Activated CD4-positive, alpha-beta T cell treated with anti-CD3 and anti-CD28 coated beads, Interleukin-2, amount 10 ng/mL, durations not matched to agents 24 days and 14 days (primary cell): ENCODE measurements at regions of chr6 and their contacts with region 1.

Region 1: DNA sequence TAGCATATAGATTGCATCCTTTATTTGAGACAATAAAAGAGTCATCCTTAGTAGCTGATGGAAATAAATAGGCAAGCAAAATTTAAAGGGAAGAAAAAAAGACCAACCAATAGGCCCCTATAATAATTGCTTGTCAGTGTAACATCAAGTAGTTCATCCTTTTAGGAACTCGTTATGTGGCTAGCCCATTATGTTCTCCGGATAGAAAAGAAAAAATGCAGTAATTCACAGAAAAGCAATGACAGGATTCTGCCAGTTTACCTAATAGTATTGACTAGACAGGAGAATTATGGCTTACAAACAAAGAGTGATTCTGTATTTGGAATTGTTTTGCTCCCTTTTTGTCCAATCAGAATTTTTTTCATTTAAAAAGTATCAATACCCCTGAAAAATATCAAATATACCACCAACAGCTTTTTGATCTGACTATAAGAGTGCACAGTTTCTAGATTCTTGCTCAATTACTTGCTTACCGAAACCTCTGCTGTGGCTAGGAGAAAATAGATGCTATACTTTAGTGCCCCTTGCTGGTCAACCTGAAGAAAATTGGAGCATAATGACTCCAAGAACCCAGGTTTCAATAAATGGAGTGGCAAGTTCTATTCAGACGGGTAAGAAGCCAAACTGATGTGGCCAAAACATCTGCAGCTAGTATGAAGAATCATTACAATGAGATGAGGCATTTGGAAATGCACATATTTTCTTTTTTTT is 91.5 kb upstream of the SASH1 start:
- DNase-seq: no peak
- H3K4me3 Mint-ChIP-seq: no peak overlapping the region
- H3K27ac Mint-ChIP-seq: no peak overlapping the region
- H3K4me1 Mint-ChIP-seq: no peaks in the 10 kb centered on the region
- H3K27me3 Mint-ChIP-seq: peaks cover 16% of the 10 kb centered on the region

Region 2: GRCh38 chr6:148177589-148178233 is 73.4 kb before region 1 on chr6:
- intact Hi-C with region 1: loop called (anchors 1 kb)
- DNase-seq: peak; percentile 70
- H3K4me3 Mint-ChIP-seq: no peak overlapping the region
- H3K27ac Mint-ChIP-seq: no peak overlapping the region
- H3K4me1 Mint-ChIP-seq: no peaks in the 10 kb centered on the region
- H3K27me3 Mint-ChIP-seq: peaks cover 12% of the 10 kb centered on the region

Region 3: DNA sequence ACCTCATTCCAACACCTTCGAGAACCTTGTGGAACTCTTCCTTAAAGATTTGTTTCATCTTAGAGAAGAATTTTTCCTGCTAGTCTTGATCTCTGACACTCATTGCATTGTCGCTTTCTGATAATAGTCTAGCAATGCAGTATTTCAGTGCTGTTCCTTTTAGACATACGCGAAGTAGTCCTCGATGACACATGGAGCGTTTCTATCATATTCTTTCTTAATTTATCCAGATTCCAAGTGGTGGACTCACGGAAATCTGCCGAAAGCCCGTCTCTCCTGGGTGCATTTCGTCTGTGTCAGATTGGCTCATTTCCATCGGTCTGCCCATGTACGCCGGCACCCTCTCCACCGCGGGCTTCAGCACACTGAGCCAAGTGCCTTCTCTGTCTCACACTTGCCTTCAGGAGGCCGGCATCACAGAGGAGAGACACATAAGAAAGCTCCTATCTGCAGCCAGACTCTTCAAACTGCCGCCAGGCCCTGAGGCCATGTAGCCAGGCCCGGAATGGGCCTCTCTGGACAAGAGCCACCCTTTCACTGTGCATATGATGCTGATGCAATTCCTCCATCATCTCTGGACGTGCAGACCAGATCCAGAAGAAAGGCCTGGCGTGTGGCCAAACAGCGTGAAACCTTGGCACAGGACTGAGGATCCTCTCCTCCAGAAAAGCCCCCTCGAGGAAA is 297.1 kb after region 1 on chr6:
- intact Hi-C with region 1: no loop called
- DNase-seq: no peak
- H3K4me3 Mint-ChIP-seq: no peak overlapping the region
- H3K27ac Mint-ChIP-seq: no peak overlapping the region
- H3K4me1 Mint-ChIP-seq: no peaks in the 10 kb centered on the region
- H3K27me3 Mint-ChIP-seq: peaks cover 15% of the 10 kb centered on the region

Region 4: DNA sequence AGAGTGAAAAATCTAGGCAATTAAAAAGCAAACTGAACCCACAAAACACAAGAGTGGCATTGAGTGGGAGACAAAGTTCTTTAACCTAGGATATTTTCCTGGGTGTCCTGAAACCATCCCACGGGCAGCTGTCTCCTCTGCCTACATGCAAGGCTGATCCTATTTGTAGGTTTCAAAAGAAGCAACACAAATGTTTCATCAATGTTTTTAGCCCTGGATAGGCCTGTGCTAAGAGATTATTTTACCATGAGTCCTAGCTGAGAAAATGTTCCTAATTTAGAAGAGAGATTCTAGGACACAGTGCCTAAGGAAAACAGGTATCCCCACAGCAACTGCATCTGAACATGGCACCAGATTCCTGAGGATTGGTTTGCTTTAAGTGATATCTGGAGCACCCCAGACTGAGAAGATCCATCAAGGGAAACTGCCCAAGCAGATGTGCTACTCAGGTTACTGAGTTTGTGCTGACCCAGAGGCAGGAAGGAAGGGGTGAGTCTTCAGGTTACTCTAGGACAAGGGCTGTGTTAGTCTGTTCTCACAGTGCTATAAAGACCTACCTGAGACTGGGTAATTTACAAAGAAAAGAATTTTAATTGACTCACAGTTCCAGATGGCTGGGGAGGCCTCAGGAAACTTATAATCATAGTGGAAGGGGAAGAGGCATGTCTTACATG is 384.1 kb after region 1 on chr6:
- intact Hi-C with region 1: no loop called
- DNase-seq: no peak
- H3K4me3 Mint-ChIP-seq: no peak overlapping the region
- H3K27ac Mint-ChIP-seq: no peak overlapping the region
- H3K4me1 Mint-ChIP-seq: peaks cover 5% of the 10 kb centered on the region
- H3K27me3 Mint-ChIP-seq: peaks cover 2% of the 10 kb centered on the region

Region 5: GRCh38 chr6:148746363-148747144 is 495.4 kb after region 1 on chr6 and contains the start of gene UST:
- intact Hi-C with region 1: no loop called
- DNase-seq: peak; percentile 83
- H3K4me3 Mint-ChIP-seq: peak within 1 kb of the TSS; percentile 94
- H3K27ac Mint-ChIP-seq: peak within 1 kb of the TSS; percentile 42
- H3K4me1 Mint-ChIP-seq: peaks cover 11% of the 10 kb centered on the region
- H3K27me3 Mint-ChIP-seq: peaks cover 76% of the 10 kb centered on the region
- total RNA-seq, gene UST: 0.70 and 0.90 TPM in 2 replicates